Activated CD4-positive, alpha-beta T cell treated with anti-CD3 and anti-CD28 coated beads for 36 hours (primary cell): ENCODE measurements at regions of chr6 and their contacts with region 1.

Region 1: GRCh38 chr6:156396068-156396771 is 381.0 kb upstream of the ARID1B start:
- DNase-seq: peak; percentile 46
- ATAC-seq: peak; percentile 66
- H3K4me3 Mint-ChIP-seq: peak overlapping the region; percentile 45
- H3K27ac Mint-ChIP-seq: peak overlapping the region; percentile 72
- H3K4me1 Mint-ChIP-seq: peaks cover 77% of the 10 kb centered on the region
- H3K27me3 Mint-ChIP-seq: peaks cover 4% of the 10 kb centered on the region

Region 2: GRCh38 chr6:156167625-156168071 is 228.6 kb before region 1 on chr6:
- CTCF ChIA-PET with region 1: no interaction called
- POLR2A ChIA-PET with region 1: no interaction called
- intact Hi-C with region 1: loop called in 1 of 2 experiments (anchors 10 kb)
- DNase-seq: no peak
- ATAC-seq: peak; percentile 47
- H3K4me3 Mint-ChIP-seq: peak overlapping the region; percentile 60
- H3K27ac Mint-ChIP-seq: peak overlapping the region; percentile 88
- H3K4me1 Mint-ChIP-seq: peaks cover 57% of the 10 kb centered on the region
- H3K27me3 Mint-ChIP-seq: no peaks in the 10 kb centered on the region

Region 3: GRCh38 chr6:156174031-156174890 is 222.0 kb before region 1 on chr6:
- CTCF ChIA-PET with region 1: no interaction called
- POLR2A ChIA-PET with region 1: no interaction called
- intact Hi-C with region 1: loop called (anchors 1 to 10 kb)
- DNase-seq: peak; percentile 73
- ATAC-seq: peak; percentile 95
- H3K4me3 Mint-ChIP-seq: peak overlapping the region; percentile 9
- H3K27ac Mint-ChIP-seq: peak overlapping the region; percentile 88
- H3K4me1 Mint-ChIP-seq: peaks cover 27% of the 10 kb centered on the region
- H3K27me3 Mint-ChIP-seq: no peaks in the 10 kb centered on the region

Region 4: GRCh38 chr6:156191895-156192294 is 204.3 kb before region 1 on chr6:
- CTCF ChIA-PET with region 1: no interaction called
- POLR2A ChIA-PET with region 1: no interaction called
- intact Hi-C with region 1: loop called (anchors 2 to 10 kb)
- DNase-seq: no peak
- ATAC-seq: peak; percentile 87
- H3K4me3 Mint-ChIP-seq: peak overlapping the region; percentile 26
- H3K27ac Mint-ChIP-seq: peak overlapping the region; percentile 74
- H3K4me1 Mint-ChIP-seq: peaks cover 42% of the 10 kb centered on the region
- H3K27me3 Mint-ChIP-seq: no peaks in the 10 kb centered on the region

Region 5: GRCh38 chr6:156444487-156444886 is 48.3 kb after region 1 on chr6:
- CTCF ChIA-PET with region 1: no interaction called
- POLR2A ChIA-PET with region 1: no interaction called
- intact Hi-C with region 1: no loop called
- DNase-seq: no peak
- ATAC-seq: no peak
- H3K4me3 Mint-ChIP-seq: no peak overlapping the region
- H3K27ac Mint-ChIP-seq: no peak overlapping the region
- H3K4me1 Mint-ChIP-seq: no peaks in the 10 kb centered on the region
- H3K27me3 Mint-ChIP-seq: no peaks in the 10 kb centered on the region